Heart left ventricle (tissue), 16 donors: ENCODE measurements at regions of chr1 and their contacts with region 1.

Region 1: GRCh38 chr1:212070720-212071302 is 35.3 kb downstream of the DTL start:
- DNase-seq: no peak
- ATAC-seq: peak in 3 of 4 donors; percentile 48 to 61 (median 57)
- H3K4me3 ChIP-seq: no peak overlapping the region
- H3K27ac ChIP-seq: peak overlapping the region in 2 of 12 donors; percentile 2 to 33
- H3K4me1 ChIP-seq: peaks cover 0 to 12% (median 0%) of the 10 kb centered on the region in 12 donors
- H3K27me3 ChIP-seq: no peaks in the 10 kb centered on the region
- CTCF ChIP-seq: peak; percentile 69 to 89 (median 80)
- POLR2A ChIP-seq: no peak

Region 2: GRCh38 chr1:211851174-211851573 is 219.6 kb before region 1 on chr1:
- intact Hi-C with region 1: no loop called
- DNase-seq: no peak
- ATAC-seq: no peak
- H3K4me3 ChIP-seq: no peak overlapping the region
- H3K27ac ChIP-seq: no peak overlapping the region
- H3K4me1 ChIP-seq: no peaks in the 10 kb centered on the region
- H3K27me3 ChIP-seq: peaks cover 0 to 5% (median 0%) of the 10 kb centered on the region in 9 donors
- CTCF ChIP-seq: no peak
- POLR2A ChIP-seq: no peak

Region 3: GRCh38 chr1:212121779-212122178 is 51.0 kb after region 1 on chr1:
- intact Hi-C with region 1: no loop called
- DNase-seq: no peak
- ATAC-seq: no peak
- H3K4me3 ChIP-seq: no peak overlapping the region
- H3K27ac ChIP-seq: no peak overlapping the region
- H3K4me1 ChIP-seq: peaks cover 0 to 31% (median 12%) of the 10 kb centered on the region in 12 donors
- H3K27me3 ChIP-seq: no peaks in the 10 kb centered on the region
- CTCF ChIP-seq: no peak
- POLR2A ChIP-seq: no peak

Region 4: DNA sequence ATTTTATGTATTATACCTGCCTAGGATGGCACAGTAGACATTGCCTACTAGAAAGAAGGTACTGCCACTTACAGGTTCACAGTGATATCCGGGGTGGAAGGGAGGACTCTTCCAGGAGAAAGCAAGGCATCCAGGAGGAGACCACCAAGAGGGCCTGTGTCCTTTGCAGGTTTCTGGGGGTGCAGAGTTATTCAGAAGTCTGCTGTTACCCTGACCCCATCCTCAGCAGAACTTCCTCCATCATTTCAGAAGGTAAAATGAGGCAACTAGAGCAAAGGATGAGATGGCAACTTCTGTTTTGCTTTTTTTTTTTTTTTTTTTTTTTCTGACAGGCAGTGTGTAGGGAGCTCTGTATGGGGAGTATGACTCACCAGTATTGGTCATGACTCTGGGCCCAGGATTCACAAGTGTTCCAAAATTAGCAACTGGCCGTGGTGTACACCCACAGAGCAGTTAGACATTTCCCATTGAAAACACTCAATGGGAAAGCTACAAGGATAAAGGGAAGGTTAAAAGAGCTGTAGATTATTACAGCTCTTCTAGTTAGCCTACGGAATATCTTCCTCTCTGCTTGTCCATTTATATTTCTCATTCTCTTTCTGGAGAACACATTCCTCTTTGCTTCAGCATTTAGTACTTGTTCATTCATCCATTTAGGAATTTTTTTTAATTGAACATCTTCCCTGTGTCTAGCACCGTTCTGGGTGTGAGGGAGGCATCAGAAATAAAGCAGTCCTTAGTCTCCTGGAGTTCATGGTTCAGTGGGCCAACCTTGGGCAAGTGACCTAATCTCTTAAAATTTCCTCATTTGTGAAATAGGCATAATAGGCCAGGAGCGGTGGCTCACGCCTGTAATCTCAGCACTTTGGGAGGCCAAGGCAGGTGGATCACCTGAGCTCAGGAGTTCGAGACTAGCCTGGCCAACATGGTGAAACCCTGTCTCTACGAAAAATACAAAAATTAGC is 163.9 kb after region 1 on chr1:
- intact Hi-C with region 1: loop called in 1 of 10 experiments (anchors 5 kb)
- DNase-seq: peak in 4 of 5 donors; percentile 59 to 82 (median 64)
- ATAC-seq: peak; percentile 96 to 98 (median 98)
- H3K4me3 ChIP-seq: no peak overlapping the region
- H3K27ac ChIP-seq: peak overlapping the region in 11 of 12 donors; percentile 53 to 88 (median 80)
- H3K4me1 ChIP-seq: peaks cover 3 to 57% (median 29%) of the 10 kb centered on the region in 12 donors
- H3K27me3 ChIP-seq: no peaks in the 10 kb centered on the region
- CTCF ChIP-seq: no peak
- POLR2A ChIP-seq: no peak